ENCODE measurements at regions of chr17 and their contacts with region 1.

Region 1: DNA sequence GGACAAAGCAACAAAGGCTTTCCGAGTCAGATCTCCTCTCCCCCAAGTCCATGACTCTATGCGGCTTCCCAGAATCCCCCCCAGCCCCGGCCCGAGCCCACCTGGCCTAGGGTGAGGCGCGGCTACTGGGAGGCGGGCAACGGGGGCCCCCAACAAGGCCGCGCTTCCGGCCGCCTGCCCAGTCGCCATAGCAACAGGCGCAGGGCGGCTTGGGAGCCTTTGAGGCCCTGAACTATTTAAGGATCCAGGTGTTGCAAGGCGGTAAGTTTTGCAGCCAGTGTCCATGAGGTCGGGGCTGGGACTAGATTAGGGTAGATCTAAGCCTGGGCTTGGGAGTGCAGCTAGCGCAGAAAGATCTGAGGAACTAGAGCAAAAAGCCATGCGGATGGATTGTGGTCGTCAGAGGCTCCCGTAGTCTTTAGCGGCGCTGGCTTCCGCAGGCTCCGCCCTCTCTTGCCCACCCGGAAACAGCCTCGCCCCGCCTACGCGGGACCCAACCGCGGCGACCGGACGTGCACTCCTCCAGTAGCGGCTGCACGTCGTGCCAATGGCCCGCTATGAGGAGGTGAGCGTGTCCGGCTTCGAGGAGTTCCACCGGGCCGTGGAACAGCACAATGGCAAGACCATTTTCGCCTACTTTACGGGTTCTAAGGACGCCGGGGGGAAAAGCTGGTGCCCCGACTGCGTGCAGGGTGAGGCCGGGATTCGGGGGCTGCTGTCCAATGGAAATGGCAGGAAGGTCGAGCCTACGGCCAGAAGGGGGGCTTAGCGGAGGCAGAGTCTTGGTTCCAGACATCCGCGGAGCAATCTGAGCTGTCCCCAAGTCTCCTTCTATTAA is at the starts of genes KIAA0753 and TXNDC17:
- DNase-seq: peak; percentile 96

Region 2: DNA sequence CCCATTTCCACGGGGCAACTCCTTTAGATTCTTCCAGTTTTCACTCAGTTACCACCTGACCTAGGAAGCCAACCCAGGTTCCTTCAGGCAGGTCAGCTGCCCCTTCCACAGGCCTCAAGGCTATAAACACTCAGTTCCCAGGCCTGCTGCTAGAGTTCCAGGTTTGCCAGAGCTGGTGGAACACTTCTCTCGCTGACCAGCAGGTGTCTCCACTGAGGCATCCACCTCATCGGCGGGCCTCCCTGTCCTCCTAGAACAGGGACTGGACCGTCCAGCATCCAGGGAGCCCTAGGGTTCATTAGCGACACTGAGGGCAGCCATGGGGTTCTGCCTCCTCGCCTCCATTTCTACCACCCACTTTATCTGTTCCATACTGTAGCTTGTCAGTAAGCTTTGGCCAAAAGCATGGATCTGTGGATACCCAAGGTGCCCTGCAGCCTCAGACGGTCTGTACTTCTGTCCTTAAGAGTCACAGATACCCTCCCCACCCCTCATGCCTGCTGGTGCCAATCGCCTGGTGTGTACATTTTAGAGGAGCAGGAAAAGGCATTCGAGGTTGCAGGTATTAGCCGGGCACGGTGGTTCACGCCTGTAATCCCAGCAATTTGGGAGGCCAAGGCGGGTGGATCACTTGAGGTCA is 167.5 kb before region 1 on chr17:
- in situ Hi-C with region 1: loop called (anchors 25 kb)
- DNase-seq: peak; percentile 77

Region 3: GRCh38 chr17:6927290-6928126 is 286.8 kb after region 1 on chr17:
- in situ Hi-C with region 1: no loop called
- DNase-seq: no peak

Measured in KBM-7 (cell line).